ENCODE measurements at regions of chr6 and their contacts with region 1.

Region 1: DNA sequence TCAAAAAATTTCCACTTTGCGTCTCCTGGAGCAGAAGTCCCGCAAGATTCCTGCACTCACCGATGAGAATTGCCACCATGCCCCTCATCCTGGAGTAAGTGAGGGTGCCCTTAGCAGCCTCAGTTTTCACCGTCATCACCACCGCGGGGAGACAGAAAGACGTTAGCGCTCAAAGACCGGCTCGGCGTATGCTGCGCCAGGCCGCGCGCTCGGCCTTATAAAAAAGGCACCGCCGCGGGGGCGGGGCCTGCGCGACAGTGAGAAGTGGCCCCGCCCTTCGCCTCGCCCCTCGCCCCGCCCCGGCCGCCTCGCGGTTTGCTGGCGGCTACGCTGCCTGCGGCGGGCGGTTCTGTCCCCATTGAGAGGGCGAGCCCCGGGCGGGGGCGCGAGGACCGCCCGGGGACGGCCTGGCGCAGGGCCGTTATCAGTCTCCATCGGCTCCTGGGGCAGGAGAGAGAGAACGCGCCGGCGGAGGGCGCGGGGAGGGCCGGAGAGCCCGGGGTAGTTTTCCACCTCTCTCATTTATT is 122.3 kb upstream of the SLC2A12 start:
- DNase-seq: peak; percentile 97

Region 2: DNA sequence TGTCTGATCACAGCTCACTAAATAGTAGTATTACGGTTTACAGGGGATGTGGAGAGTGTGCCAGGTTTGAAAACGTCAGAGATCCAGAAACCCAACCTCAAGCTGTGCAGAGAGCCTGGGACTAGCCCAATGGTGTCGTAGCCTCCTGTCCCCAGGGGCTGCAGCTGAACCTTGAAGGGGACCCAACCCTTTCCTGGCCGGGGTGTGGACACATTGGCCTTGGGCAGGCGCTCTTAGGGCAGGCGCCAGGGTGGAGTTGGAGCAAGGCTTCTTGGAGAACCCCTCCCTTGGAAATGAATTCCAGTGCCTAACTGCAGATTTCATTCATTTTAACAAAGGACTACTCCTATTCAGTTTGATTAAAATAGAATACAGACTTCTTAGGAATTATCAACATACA is 167.5 kb after region 1 on chr6:
- intact Hi-C with region 1: loop called (anchors 2 kb)
- DNase-seq: peak; percentile 90

Region 3: GRCh38 chr6:134517145-134517658 is 342.5 kb after region 1 on chr6:
- intact Hi-C with region 1: loop called (anchors 5 kb)
- DNase-seq: peak; percentile 86

Region 4: DNA sequence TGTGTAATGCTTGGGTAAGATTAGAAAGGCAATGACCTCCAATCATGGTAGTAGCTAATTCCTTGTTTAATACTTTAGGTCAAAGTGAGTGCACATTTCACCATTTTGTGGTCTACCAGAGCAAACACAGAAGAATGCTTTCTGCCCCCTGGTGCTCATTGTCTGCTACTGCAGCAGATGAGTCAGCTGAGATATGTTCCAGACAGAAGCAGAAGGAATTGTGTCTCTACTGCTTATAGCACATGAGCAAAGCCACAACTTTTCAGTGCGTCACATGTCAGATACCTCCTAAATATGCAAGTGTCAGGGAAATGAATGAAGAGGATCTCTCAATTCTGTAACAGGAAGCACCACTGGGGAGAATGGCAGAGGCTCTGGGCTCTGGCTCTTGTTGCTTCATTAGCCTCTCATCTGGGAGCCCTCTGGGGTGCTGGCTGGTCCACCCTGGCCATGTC is 466.3 kb after region 1 on chr6:
- intact Hi-C with region 1: loop called (anchors 2 kb)
- DNase-seq: peak; percentile 86

Region 5: DNA sequence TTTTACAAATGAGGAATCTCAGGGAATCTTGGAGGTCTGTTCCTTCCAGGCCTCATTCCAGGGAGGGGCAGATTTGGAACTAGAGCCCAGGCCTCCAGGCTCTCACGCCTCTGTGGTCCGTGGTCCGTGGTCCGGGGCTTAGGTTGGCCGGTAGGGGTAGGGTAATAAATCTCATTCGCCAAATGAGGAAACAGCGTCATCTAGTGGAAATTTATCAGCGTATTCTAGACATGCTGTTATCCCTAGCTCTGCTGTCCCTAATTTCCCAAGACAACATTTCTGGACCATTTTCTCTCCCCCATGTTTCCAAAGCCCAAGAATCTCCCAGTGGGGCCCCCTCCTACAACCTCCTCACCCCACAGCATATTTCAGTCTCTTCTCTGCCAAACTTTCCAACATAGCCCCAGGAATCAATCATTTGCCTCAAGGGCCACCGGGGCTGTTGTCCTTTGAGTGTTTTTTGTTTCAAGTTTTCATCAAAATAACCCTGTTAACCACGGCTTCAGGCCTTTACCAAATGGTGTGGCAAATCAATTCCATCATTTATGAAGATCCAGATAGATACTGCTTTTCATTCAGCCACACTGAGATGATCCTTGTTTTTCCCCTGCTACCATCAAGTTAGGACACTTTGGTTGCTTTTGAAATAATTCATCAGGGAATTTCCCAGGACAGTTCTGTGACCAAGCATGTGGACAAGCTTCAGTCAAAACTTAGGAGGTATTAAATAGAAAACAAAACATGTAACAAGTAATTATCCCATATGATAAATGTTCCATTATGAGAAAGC is 648.4 kb after region 1 on chr6:
- intact Hi-C with region 1: loop called (anchors 1 kb)
- DNase-seq: no peak

Region 6: DNA sequence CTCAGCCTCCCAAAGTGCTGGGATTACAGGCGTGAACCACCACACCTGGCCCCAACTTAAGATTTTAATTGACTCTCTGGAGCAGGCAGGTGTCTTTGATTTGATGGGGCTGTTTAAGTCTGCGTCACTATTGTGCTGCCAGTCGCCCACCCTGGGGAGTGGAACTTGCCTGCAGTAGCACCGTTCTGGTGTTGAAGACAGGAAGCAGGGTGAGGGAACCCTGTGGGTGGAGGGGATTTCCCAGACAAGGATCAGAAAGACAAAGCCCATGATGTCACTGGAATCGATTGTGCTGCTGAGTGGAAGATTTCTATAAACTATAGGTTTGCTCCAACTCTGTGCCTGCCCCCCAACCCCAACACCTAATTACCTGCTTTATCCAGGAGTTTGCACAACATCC is 764.2 kb after region 1 on chr6:
- intact Hi-C with region 1: loop called (anchors 5 kb)
- DNase-seq: no peak

Measured in cardiac septum (tissue), 1 donor.